Activated CD4-positive, alpha-beta T cell treated with anti-CD3 and anti-CD28 coated beads for 36 hours (primary cell): ENCODE measurements at regions of chr5 and their contacts with region 1.

Region 1: GRCh38 chr5:35852084-35852734 is 4.5 kb upstream of the IL7R start:
- DNase-seq: peak; percentile 74
- ATAC-seq: peak; percentile 43
- H3K4me3 Mint-ChIP-seq: peak overlapping the region; percentile 89
- H3K27ac Mint-ChIP-seq: peak overlapping the region; percentile 99
- H3K4me1 Mint-ChIP-seq: peaks cover 68% of the 10 kb centered on the region
- H3K27me3 Mint-ChIP-seq: no peaks in the 10 kb centered on the region

Region 2: DNA sequence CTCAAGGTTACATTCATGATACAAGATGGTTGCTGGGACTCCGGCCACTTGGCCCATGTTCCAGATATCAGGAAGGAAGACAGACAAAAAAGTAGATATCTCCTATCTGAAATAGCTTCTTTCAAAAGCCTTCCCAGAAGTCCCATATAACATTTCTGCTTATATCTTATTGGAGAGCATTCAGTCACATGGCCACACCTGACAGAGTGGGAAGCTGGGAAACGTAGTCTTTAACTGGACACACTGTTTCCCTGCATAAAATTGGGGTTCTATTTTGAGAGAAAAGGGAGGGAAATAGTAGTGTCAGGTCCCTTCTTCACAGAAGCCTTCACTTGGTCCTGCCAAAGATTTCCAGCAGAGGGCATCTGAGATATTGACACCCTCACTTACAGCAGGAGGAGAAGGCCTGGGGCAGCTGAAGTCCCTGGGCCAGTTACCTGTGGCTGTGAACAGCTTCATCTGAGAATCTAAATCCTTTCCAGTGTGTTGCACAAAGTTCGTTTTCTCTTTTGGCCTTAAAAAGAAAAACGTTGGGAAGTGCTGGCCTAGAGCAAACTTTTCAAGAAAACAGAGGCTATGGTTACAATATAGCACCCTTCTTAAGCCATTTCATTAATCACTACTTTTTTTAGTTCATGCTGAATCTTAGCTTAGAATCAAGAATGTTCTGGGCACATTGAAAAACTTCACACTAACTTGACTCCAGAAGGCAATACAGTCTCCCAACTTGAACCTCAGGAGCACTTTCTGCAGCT is 201.0 kb before region 1 on chr5:
- CTCF ChIA-PET with region 1: interaction called, 4 read pairs
- POLR2A ChIA-PET with region 1: no interaction called
- intact Hi-C with region 1: loop called in 1 of 2 experiments (anchors 5 kb)
- DNase-seq: peak; percentile 76
- ATAC-seq: peak; percentile 97
- H3K4me3 Mint-ChIP-seq: no peak overlapping the region
- H3K27ac Mint-ChIP-seq: peak overlapping the region; percentile 64
- H3K4me1 Mint-ChIP-seq: peaks cover 25% of the 10 kb centered on the region
- H3K27me3 Mint-ChIP-seq: no peaks in the 10 kb centered on the region

Region 3: DNA sequence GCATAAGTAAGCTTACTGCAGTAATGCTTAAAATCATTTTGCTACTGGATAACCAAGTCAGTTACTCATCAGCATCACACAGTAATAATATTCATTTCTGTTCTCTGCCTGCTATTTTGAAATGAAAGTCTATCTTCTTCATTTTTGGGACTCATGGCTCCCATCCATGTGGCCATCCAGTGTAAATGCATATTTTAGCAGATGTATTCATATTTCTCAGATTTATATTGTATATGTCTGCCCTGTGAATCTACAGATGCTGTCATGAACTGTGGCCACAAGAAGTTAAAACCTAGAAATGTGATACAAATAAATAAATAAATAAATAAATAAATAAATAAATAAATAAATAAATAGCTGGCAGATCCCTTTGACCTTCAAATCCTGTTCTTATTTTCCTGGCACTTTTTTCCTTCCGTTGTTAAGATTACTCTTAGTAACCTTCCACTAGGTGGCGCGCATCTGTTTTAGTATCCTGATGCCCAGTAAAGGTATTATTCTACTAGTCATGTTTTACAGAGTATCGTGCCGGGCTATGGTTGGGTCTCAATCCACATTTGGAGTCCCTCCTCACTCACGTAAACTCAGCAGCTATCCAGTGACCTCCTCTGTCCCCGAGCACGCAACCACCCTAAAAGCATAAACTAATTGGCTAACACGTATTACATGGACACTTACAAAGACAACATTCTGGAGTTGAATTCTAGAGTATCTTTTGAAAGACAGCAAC is 74.7 kb before region 1 on chr5:
- CTCF ChIA-PET with region 1: interaction called, 58 read pairs
- POLR2A ChIA-PET with region 1: interaction called, 4 read pairs
- intact Hi-C with region 1: no loop called
- DNase-seq: peak; percentile 86
- ATAC-seq: peak; percentile 33
- H3K4me3 Mint-ChIP-seq: peak overlapping the region; percentile 17
- H3K27ac Mint-ChIP-seq: peak overlapping the region; percentile 79
- H3K4me1 Mint-ChIP-seq: peaks cover 84% of the 10 kb centered on the region
- H3K27me3 Mint-ChIP-seq: no peaks in the 10 kb centered on the region

Region 4: DNA sequence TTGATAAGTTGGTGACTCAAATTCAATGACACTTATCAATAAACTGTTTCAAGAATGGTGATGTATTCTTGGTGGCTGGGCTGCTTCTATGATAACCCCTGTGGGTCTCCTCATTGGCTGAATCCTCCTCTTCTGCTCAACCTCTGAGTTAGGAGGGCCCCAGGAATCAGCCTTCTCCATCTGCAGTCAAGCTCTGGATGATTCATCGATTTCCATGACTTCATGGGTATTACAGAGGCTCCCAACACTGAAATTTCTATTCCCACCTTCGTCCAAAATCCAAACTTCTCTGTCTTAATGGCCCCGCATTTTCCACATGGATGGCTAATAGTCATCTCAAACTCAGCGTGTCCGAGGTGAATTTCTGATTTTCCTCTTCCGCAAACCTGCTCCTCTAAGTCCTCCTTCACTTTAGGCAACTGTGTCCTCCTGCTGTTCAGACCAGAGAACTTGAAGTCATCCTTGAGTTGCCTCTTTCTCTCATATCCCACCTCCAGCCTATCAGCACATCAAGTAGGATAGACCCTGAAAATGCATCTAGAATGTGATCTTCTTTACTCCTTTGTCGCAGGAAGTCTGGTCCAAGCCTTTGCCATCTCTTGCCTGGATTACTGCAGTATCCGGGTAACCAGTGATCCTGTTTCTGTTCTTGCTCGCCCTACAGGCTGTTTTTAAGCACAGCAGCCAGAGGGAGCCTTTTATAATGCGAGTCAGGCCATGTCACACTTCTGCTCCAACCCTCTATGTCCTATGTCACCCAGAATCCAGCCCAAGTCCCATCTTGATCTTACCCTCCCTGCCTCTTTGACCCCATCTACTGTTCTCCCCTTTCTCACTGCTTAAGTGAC is 36.9 kb before region 1 on chr5:
- CTCF ChIA-PET with region 1: interaction called, 40 read pairs
- POLR2A ChIA-PET with region 1: interaction called, 64 read pairs
- intact Hi-C with region 1: loop called (anchors 1 kb)
- DNase-seq: peak; percentile 72
- ATAC-seq: peak; percentile 41
- H3K4me3 Mint-ChIP-seq: no peak overlapping the region
- H3K27ac Mint-ChIP-seq: no peak overlapping the region
- H3K4me1 Mint-ChIP-seq: peaks cover 56% of the 10 kb centered on the region
- H3K27me3 Mint-ChIP-seq: no peaks in the 10 kb centered on the region

Region 5: DNA sequence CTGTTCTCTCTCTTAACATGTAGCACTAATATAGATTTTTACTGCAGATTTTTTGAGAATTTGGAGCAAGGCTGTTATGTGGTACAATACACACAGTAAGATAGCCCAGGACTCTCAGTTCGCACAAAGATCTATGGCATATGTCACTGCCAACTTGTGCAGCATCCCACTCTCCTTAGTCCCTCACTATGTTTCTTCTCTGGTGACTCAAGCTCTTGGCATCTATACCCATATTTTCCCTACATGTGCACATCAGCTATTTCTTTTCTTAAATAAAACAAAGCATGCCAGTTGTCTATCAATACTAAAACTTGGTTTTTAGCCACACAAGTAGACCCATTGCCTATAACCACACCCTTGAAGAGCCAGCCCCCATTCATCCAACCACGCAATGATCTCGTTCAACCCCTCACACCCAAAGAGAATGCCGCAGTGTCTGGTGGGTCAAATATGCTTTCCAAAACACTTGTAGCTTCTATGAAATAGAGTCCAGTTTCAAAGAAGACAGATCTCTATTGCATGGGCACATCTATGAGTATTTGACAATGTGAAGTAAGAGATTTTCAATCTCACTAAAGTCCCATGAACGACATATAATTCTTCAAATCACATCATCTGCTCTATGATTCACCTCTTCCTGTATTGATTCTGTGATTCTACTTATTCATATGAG is 13.7 kb before region 1 on chr5:
- CTCF ChIA-PET with region 1: interaction called, 16 read pairs
- POLR2A ChIA-PET with region 1: interaction called, 43 read pairs
- intact Hi-C with region 1: loop called (anchors 1 kb)
- DNase-seq: peak; percentile 69
- ATAC-seq: peak; percentile 65
- H3K4me3 Mint-ChIP-seq: peak overlapping the region; percentile 61
- H3K27ac Mint-ChIP-seq: peak overlapping the region; percentile 99
- H3K4me1 Mint-ChIP-seq: peaks cover 78% of the 10 kb centered on the region
- H3K27me3 Mint-ChIP-seq: no peaks in the 10 kb centered on the region

Region 6: GRCh38 chr5:35919191-35919590 is 67.0 kb after region 1 on chr5:
- CTCF ChIA-PET with region 1: interaction called, 15 read pairs
- POLR2A ChIA-PET with region 1: interaction called, 8 read pairs
- intact Hi-C with region 1: loop called (anchors 1 kb)
- DNase-seq: peak; percentile 46
- ATAC-seq: peak; percentile 72
- H3K4me3 Mint-ChIP-seq: peak overlapping the region; percentile 24
- H3K27ac Mint-ChIP-seq: peak overlapping the region; percentile 82
- H3K4me1 Mint-ChIP-seq: peaks cover 48% of the 10 kb centered on the region
- H3K27me3 Mint-ChIP-seq: no peaks in the 10 kb centered on the region